ENCODE measurements at regions of chr19 and their contacts with region 1.

Region 1: GRCh38 chr19:36418287-36419001 is at the start of gene ZFP82:
- DNase-seq: peak; percentile 88
- ATAC-seq: peak; percentile 98
- total RNA-seq, gene ZFP82: 3.8 to 4.7 TPM

Region 2: DNA sequence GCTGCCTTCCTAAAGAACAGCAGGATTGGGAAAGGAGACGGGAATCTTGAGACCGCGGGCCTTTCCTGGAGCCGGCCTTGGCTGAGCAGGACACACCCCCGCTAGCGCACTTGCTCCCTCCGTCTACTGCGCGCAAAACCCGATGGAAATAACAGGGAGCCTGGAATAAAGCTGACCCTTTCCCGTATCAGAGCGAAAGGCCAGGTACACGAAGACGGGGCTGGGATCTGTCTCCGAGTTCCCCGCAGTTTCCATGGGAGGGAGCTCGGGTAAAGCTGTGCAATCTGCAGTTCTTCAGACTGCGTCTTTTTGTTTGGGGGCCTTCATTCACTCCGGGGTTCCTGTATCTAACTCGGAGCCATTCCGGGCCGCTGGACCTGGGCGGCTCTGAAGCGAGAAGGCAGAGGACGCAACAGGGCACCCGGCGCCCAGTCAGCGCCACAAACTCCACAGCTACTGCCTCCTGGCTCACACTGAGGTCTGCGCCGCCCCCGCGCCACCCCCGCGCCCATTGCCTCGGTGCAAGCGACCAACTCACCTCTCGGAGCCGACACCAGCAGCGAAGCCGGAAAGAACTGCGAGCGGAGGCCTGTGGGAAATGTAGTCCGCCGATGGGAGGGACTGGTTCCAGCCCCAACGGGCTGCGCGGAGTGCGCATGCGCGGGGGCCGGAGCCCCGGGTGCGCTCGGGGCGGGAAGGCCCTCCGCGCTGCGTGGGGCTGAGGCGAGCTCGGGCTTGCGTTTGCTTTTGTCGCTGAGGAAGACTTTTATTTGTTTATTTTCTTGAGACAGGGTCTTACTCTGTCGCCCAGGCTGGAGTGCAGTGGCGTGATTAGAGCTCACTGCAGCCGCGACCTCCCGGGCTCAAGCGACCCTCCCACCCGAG is 39.6 kb before region 1 on chr19 and contains the start of gene ZFP14:
- intact Hi-C with region 1: loop called in 1 of 2 experiments (anchors 5 kb)
- DNase-seq: peak; percentile 95
- ATAC-seq: peak; percentile 99 to 100
- total RNA-seq, gene ZFP14: 2.9 to 3.3 TPM

Region 3: DNA sequence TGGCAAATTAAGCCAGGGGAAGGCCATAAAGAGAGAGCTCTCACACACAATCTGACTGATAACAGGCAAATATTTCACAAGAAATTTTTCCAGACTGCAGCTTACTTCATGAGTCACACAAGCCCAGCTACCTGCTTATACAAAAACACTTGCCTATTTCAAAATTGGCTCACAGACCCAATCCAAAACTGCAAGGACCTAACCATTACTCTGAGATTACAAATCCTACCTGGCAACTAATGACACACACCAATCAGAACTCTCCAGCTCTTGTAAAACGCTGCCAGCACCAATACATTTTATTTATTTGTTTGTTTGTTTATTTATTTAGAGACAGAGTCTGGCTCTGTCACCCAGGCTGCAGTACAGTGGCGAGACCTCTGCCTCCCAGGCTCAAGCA is 18.1 kb after region 1 on chr19:
- intact Hi-C with region 1: no loop called
- DNase-seq: no peak
- ATAC-seq: no peak

Region 4: DNA sequence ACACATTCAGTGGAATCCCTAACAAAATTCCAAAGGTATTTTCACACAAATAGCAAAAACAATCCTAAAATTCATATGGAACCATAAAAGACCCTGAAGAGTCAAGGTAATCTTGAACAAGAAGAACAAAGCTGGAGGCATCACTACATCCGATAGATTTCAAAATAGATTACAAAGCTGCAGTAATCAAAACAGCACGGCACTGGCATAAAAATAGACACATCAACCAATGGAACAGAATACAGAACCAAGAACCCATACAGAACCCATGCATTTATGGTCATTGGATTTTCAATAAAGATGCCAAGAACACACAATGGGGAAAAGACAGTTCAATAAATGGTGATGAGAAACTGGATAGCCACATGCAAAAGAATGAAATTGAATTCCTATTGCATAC is 38.4 kb after region 1 on chr19:
- intact Hi-C with region 1: no loop called
- DNase-seq: no peak
- ATAC-seq: no peak

Region 5: GRCh38 chr19:36489118-36489919 is 70.9 kb after region 1 on chr19 and contains the start of gene ZNF566:
- intact Hi-C with region 1: loop called in 1 of 2 experiments (anchors 5 kb)
- DNase-seq: peak; percentile 93
- ATAC-seq: peak; percentile 99
- total RNA-seq, gene ZNF566: 10.7 to 10.8 TPM

Measured in left cardiac atrium (tissue), 4 donors.